Sigmoid colon (tissue), 7 donors: ENCODE measurements at regions of chr11 and their contacts with region 1.

Region 1: DNA sequence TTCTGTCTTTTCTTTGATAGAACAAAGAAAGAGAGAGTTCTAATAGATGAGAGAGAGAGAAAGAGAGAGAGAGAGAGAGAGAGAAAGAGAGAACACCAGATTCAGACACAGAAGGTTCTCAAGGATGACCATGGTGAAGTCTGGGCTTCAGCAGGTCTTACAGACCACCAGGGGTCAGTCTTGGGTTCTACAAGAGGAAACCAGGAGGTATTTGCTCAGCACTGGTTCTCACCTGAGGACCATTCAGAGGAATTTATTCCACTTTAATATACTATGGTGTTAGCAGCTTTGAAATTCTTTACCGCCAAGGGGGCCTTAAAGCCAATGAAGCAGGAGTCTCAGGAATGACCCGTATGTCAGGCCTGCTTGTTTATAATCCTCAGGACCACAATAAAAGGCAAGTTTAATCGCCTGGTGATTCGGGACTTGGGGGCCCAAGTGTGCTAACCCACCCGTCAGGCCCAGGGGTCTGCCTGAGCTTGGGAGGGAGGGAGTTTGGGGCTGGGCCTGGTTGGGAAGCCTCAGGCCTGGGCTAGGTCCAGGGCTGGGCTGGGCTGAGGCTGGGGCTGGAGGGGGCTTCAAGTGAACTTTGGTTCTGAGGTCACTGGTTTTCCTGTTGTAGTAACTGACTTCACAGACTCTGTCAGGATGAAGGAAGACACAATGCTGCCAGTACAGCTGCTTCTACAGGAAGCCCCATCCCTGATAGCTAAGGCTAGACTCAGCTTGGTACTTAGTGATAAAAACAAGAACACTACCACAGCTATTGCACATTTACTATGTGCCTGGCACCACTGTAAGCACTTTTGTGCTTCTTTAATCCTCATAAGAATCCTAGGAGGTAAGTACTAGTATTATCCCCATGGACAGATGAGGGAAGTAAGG is 179.2 kb upstream of the ZBED5 start:
- DNase-seq: no peak
- H3K4me3 ChIP-seq: no peak overlapping the region
- H3K27ac ChIP-seq: peak overlapping the region; percentile 74 to 84 (median 84)
- H3K4me1 ChIP-seq: peaks cover 0 to 60% (median 52%) of the 10 kb centered on the region in 4 donors
- H3K27me3 ChIP-seq: no peaks in the 10 kb centered on the region
- CTCF ChIP-seq: peak; percentile 29 to 72 (median 68)
- EP300 ChIP-seq: no peak
- POLR2A ChIP-seq: no peak

Region 2: GRCh38 chr11:10955616-10956015 is 81.5 kb before region 1 on chr11:
- intact Hi-C with region 1: no loop called
- DNase-seq: no peak
- H3K4me3 ChIP-seq: no peak overlapping the region
- H3K27ac ChIP-seq: no peak overlapping the region
- H3K4me1 ChIP-seq: no peaks in the 10 kb centered on the region
- H3K27me3 ChIP-seq: no peaks in the 10 kb centered on the region
- CTCF ChIP-seq: no peak
- EP300 ChIP-seq: no peak
- POLR2A ChIP-seq: no peak

Region 3: GRCh38 chr11:11057472-11057854 is 20.4 kb after region 1 on chr11:
- intact Hi-C with region 1: loop called (anchors 2 kb)
- DNase-seq: no peak
- H3K4me3 ChIP-seq: no peak overlapping the region
- H3K27ac ChIP-seq: peak overlapping the region in 3 of 4 donors; percentile 64 to 74 (median 71)
- H3K4me1 ChIP-seq: peaks cover 0 to 67% (median 57%) of the 10 kb centered on the region in 4 donors
- H3K27me3 ChIP-seq: no peaks in the 10 kb centered on the region
- CTCF ChIP-seq: no peak
- EP300 ChIP-seq: no peak
- POLR2A ChIP-seq: no peak

Region 4: GRCh38 chr11:11078344-11079086 is 41.4 kb after region 1 on chr11:
- intact Hi-C with region 1: loop called (anchors 2 kb)
- DNase-seq: no peak
- H3K4me3 ChIP-seq: no peak overlapping the region
- H3K27ac ChIP-seq: no peak overlapping the region
- H3K4me1 ChIP-seq: peaks cover 0 to 53% (median 40%) of the 10 kb centered on the region in 4 donors
- H3K27me3 ChIP-seq: no peaks in the 10 kb centered on the region
- CTCF ChIP-seq: peak; percentile 20 to 42 (median 29)
- EP300 ChIP-seq: no peak
- POLR2A ChIP-seq: no peak

Region 5: DNA sequence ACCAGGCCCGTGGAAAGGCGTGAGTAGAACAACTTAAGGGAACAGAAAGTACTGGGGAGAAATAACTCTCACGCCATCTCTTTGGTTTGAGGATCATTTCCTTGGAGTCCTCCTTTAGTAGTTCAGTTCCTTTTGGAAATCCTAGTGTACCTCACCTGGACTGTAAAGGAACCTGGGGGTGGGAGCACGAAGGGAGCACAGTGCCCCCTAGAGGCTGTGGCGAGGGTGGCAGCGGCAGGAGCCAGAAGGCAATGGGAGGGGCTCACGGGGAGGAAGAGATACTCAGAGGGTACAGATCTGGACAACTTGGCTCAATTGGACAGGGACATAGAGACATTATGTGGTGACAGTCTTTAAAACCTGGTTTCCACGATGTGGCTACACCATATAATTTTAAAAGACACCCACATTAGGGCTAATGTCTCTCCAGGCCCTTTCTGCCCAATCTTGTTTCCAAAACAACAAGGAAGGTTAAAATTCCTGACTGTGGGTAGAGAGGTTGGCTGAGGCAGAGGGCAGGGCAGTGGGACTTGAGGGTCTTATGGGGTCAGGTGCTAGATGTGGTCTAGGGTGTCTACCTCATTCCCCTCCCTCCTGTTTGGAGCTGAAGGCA is 229.0 kb after region 1 on chr11:
- intact Hi-C with region 1: loop called (anchors 5 kb)
- DNase-seq: no peak
- H3K4me3 ChIP-seq: no peak overlapping the region
- H3K27ac ChIP-seq: no peak overlapping the region
- H3K4me1 ChIP-seq: peaks cover 0 to 28% (median 10%) of the 10 kb centered on the region in 4 donors
- H3K27me3 ChIP-seq: no peaks in the 10 kb centered on the region
- CTCF ChIP-seq: peak; percentile 11 to 75 (median 62)
- EP300 ChIP-seq: no peak
- POLR2A ChIP-seq: no peak

Region 6: GRCh38 chr11:11400635-11401232 is 363.6 kb after region 1 on chr11:
- intact Hi-C with region 1: loop called (anchors 5 kb)
- DNase-seq: no peak
- H3K4me3 ChIP-seq: no peak overlapping the region
- H3K27ac ChIP-seq: peak overlapping the region in 1 of 4 donors; percentile 94
- H3K4me1 ChIP-seq: peaks cover 0 to 62% (median 46%) of the 10 kb centered on the region in 4 donors
- H3K27me3 ChIP-seq: no peaks in the 10 kb centered on the region
- CTCF ChIP-seq: no peak
- EP300 ChIP-seq: no peak
- POLR2A ChIP-seq: no peak

Region 7: GRCh38 chr11:11569936-11570491 is 532.9 kb after region 1 on chr11:
- intact Hi-C with region 1: loop called (anchors 5 kb)
- DNase-seq: peak; percentile 81
- H3K4me3 ChIP-seq: no peak overlapping the region
- H3K27ac ChIP-seq: peak overlapping the region; percentile 58 to 88 (median 71)
- H3K4me1 ChIP-seq: peaks cover 0 to 90% (median 63%) of the 10 kb centered on the region in 4 donors
- H3K27me3 ChIP-seq: no peaks in the 10 kb centered on the region
- CTCF ChIP-seq: no peak
- EP300 ChIP-seq: no peak
- POLR2A ChIP-seq: no peak

Region 8: GRCh38 chr11:11621573-11622319 is 584.7 kb after region 1 on chr11 and contains the start of gene GALNT18:
- intact Hi-C with region 1: loop called (anchors 5 kb)
- DNase-seq: peak; percentile 97
- H3K4me3 ChIP-seq: peak within 1 kb of the TSS; percentile 64 to 85 (median 77)
- H3K27ac ChIP-seq: peak within 1 kb of the TSS; percentile 85 to 93 (median 88)
- H3K4me1 ChIP-seq: peaks cover 0 to 54% (median 49%) of the 10 kb centered on the region in 4 donors
- H3K27me3 ChIP-seq: no peaks in the 10 kb centered on the region
- CTCF ChIP-seq: peak in 2 of 4 experiments; percentile 50 to 54
- EP300 ChIP-seq: no peak
- POLR2A ChIP-seq: peak in 1 of 2 donors; percentile 73
- total RNA-seq, gene GALNT18: 34.9 to 48.6 (median 39.8) TPM